Heart right ventricle (tissue), 16 donors: ENCODE measurements at regions of chr7 and their contacts with region 1.

Region 1: DNA sequence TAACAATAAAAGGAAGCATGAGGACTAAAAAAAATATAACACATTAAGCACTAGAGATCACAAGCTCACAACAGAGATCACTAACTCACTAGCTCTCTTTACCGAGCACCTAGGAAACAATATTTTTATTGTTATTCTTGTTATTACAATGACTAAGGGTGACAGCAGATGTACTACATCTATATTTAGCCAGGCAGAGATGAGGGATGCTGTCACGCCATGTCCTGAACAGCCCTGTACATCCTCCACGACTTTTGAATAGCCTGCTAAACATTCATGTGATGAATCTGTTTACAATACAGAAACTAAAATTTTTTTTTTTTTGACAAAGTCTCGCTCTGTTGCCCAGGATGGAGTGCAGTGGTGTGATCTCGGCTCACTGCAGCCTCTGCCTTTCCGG is 22.7 kb downstream of the FAM133B start:
- DNase-seq: no peak
- ATAC-seq: no peak
- H3K4me3 ChIP-seq: no peak overlapping the region
- H3K27ac ChIP-seq: no peak overlapping the region
- H3K4me1 ChIP-seq: peaks cover 0 to 8% (median 0%) of the 10 kb centered on the region in 9 donors
- H3K27me3 ChIP-seq: no peaks in the 10 kb centered on the region
- CTCF ChIP-seq: no peak

Region 2: GRCh38 chr7:92534572-92534971 is 32.9 kb before region 1 on chr7:
- intact Hi-C with region 1: loop called in 1 of 10 experiments (anchors 5 kb)
- DNase-seq: no peak
- ATAC-seq: no peak
- H3K4me3 ChIP-seq: no peak overlapping the region
- H3K27ac ChIP-seq: no peak overlapping the region
- H3K4me1 ChIP-seq: peaks cover 0 to 26% (median 12%) of the 10 kb centered on the region in 9 donors
- H3K27me3 ChIP-seq: no peaks in the 10 kb centered on the region
- CTCF ChIP-seq: no peak